AG04450 (cell line): ENCODE measurements at regions of chr10 and their contacts with region 1.

Region 1: GRCh38 chr10:97037365-97038361 is 148.1 kb downstream of the SLIT1 start:
- DNase-seq: peak; percentile 54
- H3K4me3 ChIP-seq: peak overlapping the region; percentile 56
- H3K27ac ChIP-seq: no peak overlapping the region
- H3K27me3 ChIP-seq: peaks cover 24% of the 10 kb centered on the region
- CTCF ChIP-seq: peak; percentile 87

Region 2: DNA sequence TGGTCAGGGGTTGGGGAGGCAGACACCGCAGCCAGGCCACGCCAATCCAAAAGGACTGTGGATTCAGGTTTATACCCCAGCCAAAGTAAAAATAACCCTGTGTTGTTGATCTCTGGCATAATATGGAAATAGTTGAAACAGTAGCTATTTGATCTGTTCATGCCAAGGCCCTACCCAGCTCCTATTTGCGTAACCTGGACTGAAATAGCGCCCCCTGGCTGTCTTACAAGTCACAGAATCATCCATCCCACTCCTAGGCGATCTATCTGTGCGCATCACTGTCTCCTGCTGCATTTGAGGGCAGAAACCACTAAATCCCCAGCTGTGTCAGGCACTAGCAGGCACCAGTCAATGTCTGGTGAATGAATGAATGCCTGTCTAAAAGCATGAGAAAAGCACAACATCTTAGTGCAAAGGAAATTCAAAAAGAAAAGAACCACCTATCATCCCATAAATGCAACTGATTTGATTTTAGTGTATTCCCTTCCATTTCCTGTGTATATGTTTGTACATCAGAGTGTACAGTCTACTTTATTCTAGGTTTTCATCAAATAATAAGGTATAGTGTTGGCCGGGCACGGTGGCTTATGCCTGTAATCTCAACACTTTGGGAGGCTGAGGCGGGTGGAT is 11.9 kb before region 1 on chr10:
- CTCF ChIA-PET with region 1: interaction called, 55 read pairs
- POLR2A ChIA-PET with region 1: interaction called, 4 read pairs
- DNase-seq: no peak
- H3K4me3 ChIP-seq: no peak overlapping the region
- H3K27ac ChIP-seq: no peak overlapping the region
- H3K27me3 ChIP-seq: no peaks in the 10 kb centered on the region
- CTCF ChIP-seq: peak; percentile 58

Region 3: GRCh38 chr10:97048649-97049427 is 11.2 kb after region 1 on chr10:
- CTCF ChIA-PET with region 1: interaction called, 20 read pairs
- POLR2A ChIA-PET with region 1: no interaction called
- DNase-seq: no peak
- H3K4me3 ChIP-seq: no peak overlapping the region
- H3K27ac ChIP-seq: no peak overlapping the region
- H3K27me3 ChIP-seq: peaks cover 17% of the 10 kb centered on the region
- CTCF ChIP-seq: no peak

Region 4: GRCh38 chr10:97059006-97059871 is 21.6 kb after region 1 on chr10:
- CTCF ChIA-PET with region 1: interaction called, 20 read pairs
- POLR2A ChIA-PET with region 1: no interaction called
- DNase-seq: no peak
- H3K4me3 ChIP-seq: no peak overlapping the region
- H3K27ac ChIP-seq: no peak overlapping the region
- H3K27me3 ChIP-seq: peaks cover 24% of the 10 kb centered on the region
- CTCF ChIP-seq: no peak

Region 5: DNA sequence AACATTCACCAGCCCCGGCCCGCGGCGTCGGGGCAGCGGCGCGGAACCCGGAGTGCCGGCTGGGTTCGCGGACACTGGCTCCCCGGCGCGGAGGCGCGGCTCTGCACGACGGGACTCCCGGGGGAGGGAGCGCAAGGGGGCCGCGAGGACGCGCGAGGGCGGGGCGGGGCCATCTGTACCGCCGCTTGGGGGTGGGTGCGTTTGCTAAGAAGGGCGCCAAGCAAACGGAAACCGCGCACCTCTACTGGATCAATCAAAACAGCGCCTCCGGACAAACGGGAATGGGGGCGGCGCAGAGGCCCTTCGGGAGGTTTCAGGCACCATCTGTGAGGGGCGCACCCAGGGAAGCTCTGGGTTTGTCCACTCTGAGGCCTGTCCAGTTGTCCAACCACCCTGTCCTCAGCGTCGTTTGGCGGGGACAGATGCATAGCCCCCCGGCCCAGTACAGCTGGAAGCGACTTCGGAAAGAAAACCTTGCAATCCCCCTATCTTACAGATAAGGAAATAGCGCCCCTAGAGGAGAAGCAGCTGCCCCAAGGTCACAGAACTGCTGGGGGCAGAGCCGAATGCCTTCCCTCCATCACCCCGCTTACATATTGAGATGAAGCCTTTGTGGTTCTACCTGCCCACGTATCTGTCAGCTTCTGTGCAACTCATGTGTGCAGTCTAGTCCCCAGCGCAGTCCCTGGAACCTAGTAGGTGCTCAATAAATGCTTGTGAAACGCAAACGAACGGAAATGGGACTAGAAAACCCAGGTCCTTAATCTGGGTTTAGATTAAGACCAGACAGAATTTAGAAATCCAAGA is 158.8 kb after region 1 on chr10:
- CTCF ChIA-PET with region 1: interaction called, 11 read pairs
- POLR2A ChIA-PET with region 1: no interaction called
- DNase-seq: peak; percentile 10
- H3K4me3 ChIP-seq: peak overlapping the region; percentile 61
- H3K27ac ChIP-seq: no peak overlapping the region
- H3K27me3 ChIP-seq: peaks cover 29% of the 10 kb centered on the region
- CTCF ChIP-seq: peak; percentile 83

Region 6: GRCh38 chr10:97416565-97416964 is 378.9 kb after region 1 on chr10:
- CTCF ChIA-PET with region 1: no interaction called
- POLR2A ChIA-PET with region 1: no interaction called
- DNase-seq: no peak
- H3K4me3 ChIP-seq: no peak overlapping the region
- H3K27ac ChIP-seq: no peak overlapping the region
- H3K27me3 ChIP-seq: no peaks in the 10 kb centered on the region
- CTCF ChIP-seq: no peak